Activated CD4-positive, alpha-beta memory T cell treated with anti-CD3 and anti-CD28 coated beads for 36 hours (primary cell): ENCODE measurements at regions of chrX and their contacts with region 1.

Region 1: DNA sequence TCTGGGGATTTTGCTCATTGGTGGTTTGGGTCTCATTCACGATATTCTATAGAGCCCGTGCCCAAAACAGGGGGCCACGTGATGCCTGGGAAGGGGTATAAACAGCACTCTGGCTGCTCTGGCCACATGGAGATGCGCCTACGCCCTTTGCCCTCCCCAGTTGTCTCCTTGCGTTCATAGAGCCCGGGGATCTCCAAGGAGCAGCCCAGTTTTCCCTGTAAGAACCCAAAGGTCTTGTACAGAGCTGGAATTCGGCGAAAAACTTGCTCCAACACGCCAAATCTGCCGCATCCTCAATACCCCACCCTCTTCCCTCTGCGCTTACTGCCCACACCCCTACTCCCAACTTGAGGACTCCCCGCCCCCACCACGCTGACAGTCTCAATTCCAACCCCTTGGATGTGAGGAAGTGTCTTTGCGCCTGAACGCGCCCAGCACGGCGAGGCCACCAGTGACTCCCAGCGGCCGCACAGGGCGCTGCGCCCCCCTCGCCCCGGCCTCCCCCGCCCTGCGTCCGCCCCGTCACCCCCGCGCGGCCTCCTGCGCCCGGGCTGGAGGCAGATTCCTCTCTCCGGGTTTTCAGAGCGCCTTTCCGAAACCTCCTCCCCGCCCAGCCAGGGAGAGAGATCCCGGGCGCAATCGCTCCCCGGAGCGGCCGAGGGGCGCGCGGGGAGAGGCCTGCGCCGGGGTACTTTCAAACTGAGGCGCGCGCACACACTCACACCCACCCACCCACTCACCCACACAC is at the start of gene NHS:
- DNase-seq: peak; percentile 31
- H3K4me3 Mint-ChIP-seq: no peak within 1 kb of the TSS
- H3K27ac Mint-ChIP-seq: no peak within 1 kb of the TSS
- H3K4me1 Mint-ChIP-seq: peaks cover 9% of the 10 kb centered on the region
- H3K27me3 Mint-ChIP-seq: peaks cover 22% of the 10 kb centered on the region
- total RNA-seq, gene NHS: 4.8 to 5.0 TPM

Region 2: GRCh38 chrX:17278961-17279360 is 95.8 kb before region 1 on chrX:
- CTCF ChIA-PET with region 1: no interaction called
- POLR2A ChIA-PET with region 1: no interaction called
- intact Hi-C with region 1: no loop called
- DNase-seq: no peak
- H3K4me3 Mint-ChIP-seq: no peak overlapping the region
- H3K27ac Mint-ChIP-seq: no peak overlapping the region
- H3K4me1 Mint-ChIP-seq: no peaks in the 10 kb centered on the region
- H3K27me3 Mint-ChIP-seq: no peaks in the 10 kb centered on the region

Region 3: DNA sequence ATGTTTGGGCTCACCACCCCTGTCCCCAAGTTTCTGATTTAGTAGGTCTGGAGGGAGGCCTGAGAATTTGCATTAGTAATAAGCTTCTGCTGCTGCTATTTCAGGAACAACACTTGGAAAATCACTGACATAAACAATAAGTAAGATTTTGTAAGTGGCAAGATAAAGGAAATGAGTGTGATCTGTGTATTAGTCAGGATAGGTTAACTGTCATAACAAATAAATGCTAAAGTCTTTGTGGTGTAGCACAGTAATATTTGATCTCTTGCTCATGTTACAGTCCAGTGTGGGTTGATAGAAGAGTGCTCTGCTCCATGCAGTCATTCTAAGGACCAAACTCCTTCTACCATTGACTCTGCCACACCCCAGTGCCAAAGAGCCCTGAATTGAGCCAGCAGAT is 67.2 kb after region 1 on chrX:
- CTCF ChIA-PET with region 1: no interaction called
- POLR2A ChIA-PET with region 1: no interaction called
- intact Hi-C with region 1: loop called (anchors 2 kb)
- DNase-seq: peak; percentile 10
- H3K4me3 Mint-ChIP-seq: no peak overlapping the region
- H3K27ac Mint-ChIP-seq: no peak overlapping the region
- H3K4me1 Mint-ChIP-seq: peaks cover 4% of the 10 kb centered on the region
- H3K27me3 Mint-ChIP-seq: no peaks in the 10 kb centered on the region

Region 4: GRCh38 chrX:17521871-17522693 is 147.3 kb after region 1 on chrX:
- CTCF ChIA-PET with region 1: no interaction called
- POLR2A ChIA-PET with region 1: no interaction called
- intact Hi-C with region 1: loop called (anchors 10 kb)
- DNase-seq: no peak
- H3K4me3 Mint-ChIP-seq: no peak overlapping the region
- H3K27ac Mint-ChIP-seq: no peak overlapping the region
- H3K4me1 Mint-ChIP-seq: no peaks in the 10 kb centered on the region
- H3K27me3 Mint-ChIP-seq: no peaks in the 10 kb centered on the region